T-cell (primary cell): ENCODE measurements at regions of chr19 and their contacts with region 1.

Region 1: DNA sequence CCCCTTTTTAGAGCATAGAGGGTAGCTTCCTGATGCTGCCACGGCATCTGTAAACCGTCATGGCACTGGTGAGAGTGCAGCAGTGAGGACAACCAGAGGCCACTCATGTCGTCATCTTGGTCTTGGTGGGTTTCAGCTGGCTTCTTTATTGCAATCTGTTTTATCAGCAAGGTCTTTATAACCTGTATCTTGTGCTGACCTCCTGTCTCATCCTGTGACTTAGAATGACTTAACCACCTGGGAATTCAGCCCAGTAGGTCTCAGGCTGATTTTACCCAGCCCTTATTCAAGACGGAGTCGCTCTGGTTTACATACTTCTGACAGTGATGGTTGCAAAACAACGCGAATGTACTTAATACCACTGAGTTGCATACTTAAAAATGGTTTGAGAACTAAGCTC is 14.4 kb upstream of the FBN3 start:
- DNase-seq: no peak
- ATAC-seq: no peak
- H3K4me3 ChIP-seq: no peak overlapping the region
- H3K4me3 Mint-ChIP-seq: no peak overlapping the region
- H3K27ac ChIP-seq: no peak overlapping the region
- H3K27ac Mint-ChIP-seq: no peak overlapping the region
- H3K4me1 ChIP-seq: no peaks in the 10 kb centered on the region
- H3K4me1 Mint-ChIP-seq: no peaks in the 10 kb centered on the region
- H3K27me3 ChIP-seq: no peaks in the 10 kb centered on the region
- H3K27me3 Mint-ChIP-seq: no peaks in the 10 kb centered on the region

Region 2: DNA sequence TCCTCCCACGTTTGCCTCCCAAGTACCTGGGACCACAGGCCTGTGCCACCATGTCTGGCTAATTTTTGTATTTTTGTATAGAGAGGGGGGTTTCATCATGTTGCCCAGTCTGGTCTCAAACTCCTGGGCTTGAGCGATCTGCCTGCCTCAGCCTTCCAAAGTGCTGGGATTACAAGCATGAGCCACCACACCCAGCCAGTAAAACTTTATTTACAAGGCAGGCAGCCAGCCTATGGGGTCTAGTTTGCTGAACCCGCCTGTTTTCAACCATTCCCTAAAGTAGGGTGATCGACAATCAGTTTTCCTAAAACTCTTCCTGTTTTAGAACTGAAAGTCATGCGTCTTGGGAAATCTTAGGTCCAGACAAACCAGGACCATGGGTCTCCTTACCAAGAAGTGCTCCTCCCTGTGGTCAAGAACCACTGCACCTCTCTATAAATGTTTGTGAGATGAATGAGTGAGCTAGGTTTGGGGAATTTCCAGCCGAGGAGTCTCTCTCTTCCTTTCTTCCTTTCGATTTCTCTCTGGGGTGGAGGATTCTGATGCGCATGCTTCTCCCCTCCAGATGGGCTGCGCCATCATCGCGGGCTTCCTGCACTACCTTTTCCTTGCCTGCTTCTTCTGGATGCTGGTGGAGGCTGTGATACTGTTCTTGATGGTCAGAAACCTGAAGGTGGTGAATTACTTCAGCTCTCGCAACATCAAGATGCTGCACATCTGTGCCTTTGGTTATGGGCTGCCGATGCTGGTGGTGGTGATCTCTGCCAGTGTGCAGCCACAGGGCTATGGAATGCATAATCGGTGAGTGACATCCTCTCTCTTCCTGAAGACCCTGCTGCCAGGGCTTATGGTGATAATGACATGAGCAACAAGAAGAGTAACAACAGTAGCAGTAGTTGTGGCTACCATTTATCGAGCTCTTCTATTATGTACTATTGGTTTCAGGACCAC is 1237.7 kb before region 1 on chr19:
- CTCF ChIA-PET with region 1: no interaction called
- POLR2A ChIA-PET with region 1: interaction called in 1 of 2 experiments, 16 read pairs
- DNase-seq: peak in 11 of 35 experiments; percentile 3 to 68 (median 10)
- ATAC-seq: peak in 3 of 4 experiments; percentile 36 to 96 (median 37)
- H3K4me3 ChIP-seq: peak overlapping the region in 1 of 2 donors; percentile 27
- H3K4me3 Mint-ChIP-seq: peak overlapping the region; percentile 69 to 75 (median 72)
- H3K27ac ChIP-seq: peak overlapping the region; percentile 28
- H3K27ac Mint-ChIP-seq: peak overlapping the region; percentile 74 to 92
- H3K4me1 ChIP-seq: peaks cover 2 to 19% of the 10 kb centered on the region in 2 experiments
- H3K4me1 Mint-ChIP-seq: peaks cover 14 to 19% (median 16%) of the 10 kb centered on the region in 3 donors
- H3K27me3 ChIP-seq: no peaks in the 10 kb centered on the region
- H3K27me3 Mint-ChIP-seq: no peaks in the 10 kb centered on the region

Region 3: DNA sequence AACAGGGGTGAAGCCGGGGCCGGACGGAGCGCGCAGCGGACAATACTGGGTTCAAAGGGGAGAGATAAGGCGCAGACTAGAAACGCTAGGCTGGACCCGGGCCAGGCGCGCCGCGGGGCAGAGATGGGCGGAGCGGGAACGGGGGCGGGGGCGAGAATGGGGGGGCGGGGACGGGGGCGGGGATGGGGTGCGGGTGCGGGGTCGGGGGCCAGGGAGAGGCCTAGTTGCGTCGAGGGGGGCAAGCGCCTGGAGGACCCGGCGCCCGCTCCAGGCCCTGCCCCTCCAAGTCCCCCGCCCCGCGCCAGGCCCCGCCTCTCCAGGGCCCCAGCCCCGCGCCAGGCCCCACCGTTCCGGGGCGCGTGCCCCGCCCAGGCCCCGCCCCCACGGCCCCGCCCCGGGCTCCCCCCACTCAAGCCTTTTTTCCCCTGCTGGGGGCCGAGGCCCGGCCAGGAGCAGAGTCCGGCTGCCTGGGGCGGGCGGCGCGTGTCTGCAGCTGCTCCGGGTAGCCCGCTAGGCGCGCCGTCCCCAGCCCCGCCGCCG is 45.2 kb after region 1 on chr19 and contains the start of gene CERS4:
- CTCF ChIA-PET with region 1: no interaction called
- POLR2A ChIA-PET with region 1: no interaction called
- DNase-seq: peak in 34 of 35 experiments; percentile 36 to 82 (median 69)
- ATAC-seq: peak; percentile 80 to 91 (median 86)
- H3K4me3 ChIP-seq: peak within 1 kb of the TSS; percentile 45 to 91
- H3K4me3 Mint-ChIP-seq: peak within 1 kb of the TSS; percentile 84 to 94 (median 87)
- H3K27ac ChIP-seq: peak within 1 kb of the TSS; percentile 89
- H3K27ac Mint-ChIP-seq: peak within 1 kb of the TSS; percentile 59 to 84
- H3K4me1 ChIP-seq: peaks cover 3 to 33% of the 10 kb centered on the region in 2 experiments
- H3K4me1 Mint-ChIP-seq: peaks cover 20 to 35% (median 25%) of the 10 kb centered on the region in 3 donors
- H3K27me3 ChIP-seq: no peaks in the 10 kb centered on the region
- H3K27me3 Mint-ChIP-seq: no peaks in the 10 kb centered on the region
- total RNA-seq, gene CERS4: 23.1 to 46.9 (median 29.0) TPM